ENCODE measurements at regions of chr20 and their contacts with region 1.

Region 1: DNA sequence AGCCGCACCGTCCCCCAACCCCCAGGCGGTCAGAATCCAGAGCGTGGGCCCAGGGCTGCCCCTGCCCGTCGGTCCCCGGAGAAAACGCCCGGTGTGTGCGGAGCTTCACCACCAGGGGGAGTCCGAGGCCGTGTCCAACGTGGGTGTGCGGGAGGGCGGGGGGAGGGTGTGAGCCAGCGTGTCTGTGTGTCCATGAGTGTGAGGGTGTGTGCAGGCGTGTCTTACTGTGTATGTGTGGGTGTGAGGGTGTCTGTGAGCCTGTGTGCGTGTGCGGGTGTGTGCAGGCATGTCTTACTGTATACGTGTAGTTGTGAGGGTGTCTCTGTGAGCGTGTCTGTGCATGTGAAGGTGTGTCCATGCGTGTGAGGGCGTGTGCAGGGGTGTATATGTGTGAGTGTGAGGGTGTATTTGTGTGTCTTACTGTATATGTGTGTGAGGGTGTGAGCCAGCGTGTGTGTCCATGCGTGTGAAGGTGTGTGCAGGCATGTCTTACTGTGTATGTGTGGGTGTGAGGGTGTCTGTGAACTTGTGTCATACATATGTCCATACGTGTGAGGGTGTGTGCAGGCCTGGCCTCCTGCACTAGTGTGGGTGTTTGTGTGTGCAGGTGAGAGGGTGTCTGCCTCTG is 24.6 kb upstream of the GATA5 start:
- DNase-seq: peak; percentile 75
- H3K4me3 ChIP-seq: no peak overlapping the region
- H3K27ac ChIP-seq: no peak overlapping the region
- H3K4me1 ChIP-seq: no peaks in the 10 kb centered on the region
- H3K27me3 ChIP-seq: no peaks in the 10 kb centered on the region; the same call in 1 of the 2 replicates

Region 2: GRCh38 chr20:62570897-62571666 is 70.7 kb after region 1 on chr20:
- in situ Hi-C with region 1: no loop called
- DNase-seq: no peak
- H3K4me3 ChIP-seq: no peak overlapping the region
- H3K27ac ChIP-seq: no peak overlapping the region
- H3K4me1 ChIP-seq: no peaks in the 10 kb centered on the region
- H3K27me3 ChIP-seq: peaks cover 8% of the 10 kb centered on the region; the same call in 1 of the 2 replicates

Region 3: GRCh38 chr20:62616728-62617621 is 116.6 kb after region 1 on chr20:
- in situ Hi-C with region 1: loop called (anchors 5 kb)
- DNase-seq: peak; percentile 78
- H3K4me3 ChIP-seq: no peak overlapping the region
- H3K27ac ChIP-seq: no peak overlapping the region
- H3K4me1 ChIP-seq: no peaks in the 10 kb centered on the region
- H3K27me3 ChIP-seq: peaks cover 19% of the 10 kb centered on the region

Region 4: DNA sequence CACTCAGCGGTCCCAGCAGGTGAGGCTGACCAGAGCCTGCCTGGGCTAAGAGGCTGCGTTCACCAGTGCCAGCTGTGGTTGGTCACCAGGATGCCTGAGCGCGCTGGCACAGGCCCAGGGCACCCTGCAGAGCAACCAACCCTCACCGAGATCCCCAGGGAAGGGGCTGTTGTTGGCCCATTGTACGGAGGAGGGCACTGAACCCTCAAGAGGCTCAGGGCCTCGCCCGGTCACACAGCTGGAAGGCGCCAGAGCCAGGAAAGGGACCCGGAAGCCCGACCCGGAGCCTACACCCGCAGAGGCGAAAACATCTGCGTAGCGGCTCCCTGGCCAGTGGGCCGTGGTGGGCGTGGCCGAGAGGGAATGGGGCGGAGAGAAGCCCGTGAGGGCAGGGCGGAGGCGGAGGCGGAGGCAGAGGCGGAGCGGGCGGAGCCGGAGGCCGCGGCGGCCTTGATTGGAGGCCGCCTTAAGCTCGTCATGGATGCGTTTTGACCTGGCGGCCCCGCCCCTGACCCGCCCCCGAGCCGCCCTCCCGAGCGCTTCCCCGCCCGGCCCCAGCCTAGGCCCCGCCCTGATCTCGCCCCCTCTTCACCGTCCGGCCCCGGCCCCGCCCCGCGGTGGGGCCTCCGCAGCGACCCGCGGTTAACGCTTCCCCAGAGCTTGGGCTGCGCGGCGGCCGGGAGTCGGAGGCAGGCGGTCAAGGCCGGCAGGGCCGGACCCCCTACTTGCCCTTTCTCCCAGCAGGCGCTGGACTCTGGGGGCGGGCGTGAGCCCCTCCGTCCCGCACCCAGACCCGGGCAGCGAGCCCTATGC is 293.8 kb after region 1 on chr20:
- in situ Hi-C with region 1: loop called (anchors 25 kb)
- DNase-seq: peak; percentile 98
- H3K4me3 ChIP-seq: peak overlapping the region; percentile 78
- H3K27ac ChIP-seq: peak overlapping the region; percentile 67
- H3K4me1 ChIP-seq: peaks cover 14% of the 10 kb centered on the region; the same call in 1 of the 2 replicates
- H3K27me3 ChIP-seq: no peaks in the 10 kb centered on the region